GM12878 (cell line): ENCODE measurements at regions of chr7 and their contacts with region 1.

Region 1: DNA sequence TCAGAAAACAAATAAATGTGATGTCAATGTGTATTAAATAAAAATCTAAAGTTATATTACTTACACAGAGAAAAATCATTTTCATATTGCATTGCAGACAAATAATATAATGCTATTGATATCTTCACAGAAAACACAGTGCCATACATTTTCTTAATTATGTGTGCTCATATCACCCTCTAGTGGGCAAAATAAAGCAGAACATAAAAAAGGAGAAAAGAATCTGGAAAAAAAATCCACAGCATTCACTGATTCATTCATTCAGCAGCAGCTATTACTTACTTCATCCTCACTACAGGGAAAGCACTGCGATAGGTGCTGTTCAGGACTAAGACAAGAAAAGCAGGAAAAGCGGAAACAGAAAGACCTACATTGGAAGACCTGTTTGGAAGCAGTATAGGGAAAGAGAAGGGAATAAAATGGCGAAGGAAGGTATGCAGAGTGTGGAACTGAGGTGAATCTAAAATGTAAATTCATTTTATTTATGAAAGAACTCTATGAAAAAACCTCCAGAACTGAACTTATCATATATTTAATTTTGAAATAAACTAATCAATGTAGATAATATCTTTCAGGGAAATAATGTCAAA is 73.2 kb downstream of the POT1 start:
- DNase-seq: no peak
- ATAC-seq: peak; percentile 75
- H3K4me3 ChIP-seq: no peak overlapping the region
- H3K27ac ChIP-seq: no peak overlapping the region
- H3K4me1 ChIP-seq: no peaks in the 10 kb centered on the region
- H3K27me3 ChIP-seq: no peaks in the 10 kb centered on the region
- CTCF ChIP-seq: peak; percentile 40 to 62 (median 56); a peak in 5 of 6 replicates
- EP300 ChIP-seq: no peak
- POLR2A ChIP-seq: no peak
- RAD21 ChIP-seq: peak; percentile 69

Region 2: DNA sequence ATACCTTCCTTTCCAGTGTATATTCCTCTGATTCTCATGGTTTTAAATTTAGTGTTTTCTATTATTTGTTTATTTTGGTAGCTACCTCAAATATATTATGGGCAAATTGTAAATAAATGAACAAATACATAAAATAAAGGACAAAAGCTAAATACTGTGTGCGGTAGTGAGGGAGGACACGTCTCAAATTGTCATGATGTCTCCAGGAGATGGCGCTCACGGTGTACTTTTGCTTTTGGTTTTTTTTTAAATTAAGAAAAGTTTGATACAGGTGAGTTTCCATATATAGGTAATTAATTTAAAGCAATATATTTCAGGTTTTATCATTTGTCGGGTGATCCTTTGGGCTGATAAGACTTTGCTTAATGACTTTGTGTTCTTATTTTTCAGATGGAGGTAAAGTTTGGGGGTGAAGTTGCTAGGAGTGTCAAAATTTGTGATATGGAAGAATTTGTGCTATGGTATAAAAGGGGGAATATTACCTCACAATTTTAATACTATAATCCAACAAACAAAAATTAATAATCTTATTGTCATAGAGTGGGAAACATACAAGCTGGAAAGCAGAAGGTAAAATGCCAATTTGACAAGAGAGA is 755.1 kb before region 1 on chr7:
- CTCF ChIA-PET with region 1: interaction called, 6 read pairs
- POLR2A ChIA-PET with region 1: no interaction called
- RAD21 ChIA-PET with region 1: no interaction called
- SMC1A ChIA-PET with region 1: interaction called, 6 read pairs
- in situ Hi-C with region 1: no loop called
- intact Hi-C with region 1: loop called (anchors 2 kb)
- DNase-seq: no peak
- ATAC-seq: no peak
- H3K4me3 ChIP-seq: no peak overlapping the region
- H3K27ac ChIP-seq: no peak overlapping the region
- H3K4me1 ChIP-seq: no peaks in the 10 kb centered on the region
- H3K27me3 ChIP-seq: no peaks in the 10 kb centered on the region
- CTCF ChIP-seq: peak; percentile 21 to 34 (median 26); a peak in 3 of 6 replicates
- EP300 ChIP-seq: no peak
- POLR2A ChIP-seq: no peak
- RAD21 ChIP-seq: peak; percentile 47; the same call in 1 of the 2 replicates

Region 3: GRCh38 chr7:124152859-124153692 is 703.3 kb before region 1 on chr7:
- CTCF ChIA-PET with region 1: interaction called, 3 read pairs
- POLR2A ChIA-PET with region 1: no interaction called
- RAD21 ChIA-PET with region 1: interaction called, 3 read pairs
- SMC1A ChIA-PET with region 1: interaction called, 4 read pairs
- in situ Hi-C with region 1: no loop called
- intact Hi-C with region 1: loop called (anchors 5 kb)
- DNase-seq: no peak
- ATAC-seq: peak; percentile 88
- H3K4me3 ChIP-seq: no peak overlapping the region
- H3K27ac ChIP-seq: no peak overlapping the region
- H3K4me1 ChIP-seq: no peaks in the 10 kb centered on the region
- H3K27me3 ChIP-seq: no peaks in the 10 kb centered on the region
- CTCF ChIP-seq: peak; percentile 34 to 44 (median 40); a peak in 4 of 6 replicates
- EP300 ChIP-seq: no peak
- POLR2A ChIP-seq: no peak
- RAD21 ChIP-seq: peak; percentile 49

Region 4: GRCh38 chr7:124874644-124875163 is 18.3 kb after region 1 on chr7:
- CTCF ChIA-PET with region 1: interaction called, 10 read pairs
- POLR2A ChIA-PET with region 1: no interaction called
- RAD21 ChIA-PET with region 1: no interaction called
- SMC1A ChIA-PET with region 1: no interaction called
- in situ Hi-C with region 1: no loop called
- intact Hi-C with region 1: no loop called
- DNase-seq: no peak
- ATAC-seq: no peak
- H3K4me3 ChIP-seq: no peak overlapping the region
- H3K27ac ChIP-seq: no peak overlapping the region
- H3K4me1 ChIP-seq: no peaks in the 10 kb centered on the region
- H3K27me3 ChIP-seq: no peaks in the 10 kb centered on the region
- CTCF ChIP-seq: no peak
- EP300 ChIP-seq: no peak
- POLR2A ChIP-seq: no peak
- RAD21 ChIP-seq: no peak

Region 5: GRCh38 chr7:124908259-124908658 is 51.9 kb after region 1 on chr7:
- CTCF ChIA-PET with region 1: no interaction called
- POLR2A ChIA-PET with region 1: no interaction called
- RAD21 ChIA-PET with region 1: no interaction called
- SMC1A ChIA-PET with region 1: no interaction called
- in situ Hi-C with region 1: no loop called
- intact Hi-C with region 1: no loop called
- DNase-seq: no peak
- ATAC-seq: no peak
- H3K4me3 ChIP-seq: no peak overlapping the region
- H3K27ac ChIP-seq: no peak overlapping the region
- H3K4me1 ChIP-seq: no peaks in the 10 kb centered on the region
- H3K27me3 ChIP-seq: no peaks in the 10 kb centered on the region
- CTCF ChIP-seq: no peak
- EP300 ChIP-seq: no peak
- POLR2A ChIP-seq: no peak
- RAD21 ChIP-seq: no peak

Region 6: GRCh38 chr7:124996778-124997177 is 140.4 kb after region 1 on chr7:
- CTCF ChIA-PET with region 1: no interaction called
- POLR2A ChIA-PET with region 1: no interaction called
- RAD21 ChIA-PET with region 1: no interaction called
- SMC1A ChIA-PET with region 1: interaction called, 3 read pairs
- in situ Hi-C with region 1: no loop called
- intact Hi-C with region 1: loop called (anchors 5 kb)
- DNase-seq: no peak
- ATAC-seq: peak; percentile 71
- H3K4me3 ChIP-seq: no peak overlapping the region
- H3K27ac ChIP-seq: no peak overlapping the region
- H3K4me1 ChIP-seq: no peaks in the 10 kb centered on the region
- H3K27me3 ChIP-seq: no peaks in the 10 kb centered on the region
- CTCF ChIP-seq: peak; percentile 9 to 34 (median 26); a peak in 2 of 6 replicates
- EP300 ChIP-seq: no peak
- POLR2A ChIP-seq: no peak
- RAD21 ChIP-seq: peak; percentile 62

Region 7: DNA sequence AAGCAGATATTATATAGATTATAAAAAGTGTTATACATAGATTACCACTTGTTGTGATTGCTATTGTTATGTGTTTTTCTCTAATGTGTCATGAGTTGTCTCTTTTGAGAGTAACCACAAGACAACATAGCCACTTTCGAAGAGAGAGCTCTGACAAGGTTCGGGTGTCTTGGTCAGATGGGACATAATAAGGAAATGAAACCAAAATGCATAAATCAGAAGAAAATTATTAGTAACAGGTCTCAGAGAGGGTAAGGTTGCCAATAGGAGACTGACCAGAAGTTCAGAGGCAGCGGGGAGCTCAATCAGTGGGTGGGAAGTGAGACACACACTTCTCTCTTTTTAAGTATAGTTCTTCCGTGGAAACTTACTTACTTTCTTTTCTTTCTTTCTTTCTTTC is 712.4 kb after region 1 on chr7:
- CTCF ChIA-PET with region 1: no interaction called
- POLR2A ChIA-PET with region 1: no interaction called
- RAD21 ChIA-PET with region 1: no interaction called
- SMC1A ChIA-PET with region 1: no interaction called
- in situ Hi-C with region 1: no loop called
- intact Hi-C with region 1: no loop called
- DNase-seq: peak; percentile 31
- ATAC-seq: peak; percentile 99
- H3K4me3 ChIP-seq: no peak overlapping the region
- H3K27ac ChIP-seq: no peak overlapping the region
- H3K4me1 ChIP-seq: no peaks in the 10 kb centered on the region
- H3K27me3 ChIP-seq: no peaks in the 10 kb centered on the region
- CTCF ChIP-seq: no peak
- EP300 ChIP-seq: peak; percentile 59 to 88; a peak in 3 of 4 replicates
- POLR2A ChIP-seq: no peak
- RAD21 ChIP-seq: no peak